ENCODE measurements at regions of chr6 and their contacts with region 1.

Region 1: GRCh38 chr6:11575408-11576033 is 38.0 kb downstream of the TMEM170B start:
- DNase-seq: peak; percentile 71 to 86 (median 83)
- H3K4me3 ChIP-seq: peak overlapping the region; percentile 36 to 71 (median 61)
- H3K4me3 Mint-ChIP-seq: peak overlapping the region; percentile 75 to 88
- H3K27ac ChIP-seq: peak overlapping the region; percentile 42 to 71
- H3K27ac Mint-ChIP-seq: peak overlapping the region; percentile 79 to 93 (median 89)
- H3K4me1 ChIP-seq: peaks cover 19 to 28% of the 10 kb centered on the region in 2 donors
- H3K4me1 Mint-ChIP-seq: peaks cover 42% of the 10 kb centered on the region
- H3K27me3 ChIP-seq: no peaks in the 10 kb centered on the region
- H3K27me3 Mint-ChIP-seq: no peaks in the 10 kb centered on the region
- CTCF ChIP-seq: peak; percentile 98

Region 2: GRCh38 chr6:10719296-10719963 is 856.1 kb before region 1 on chr6:
- intact Hi-C with region 1: no loop called
- DNase-seq: peak in 2 of 3 donors; percentile 12 to 14
- H3K4me3 ChIP-seq: peak overlapping the region in 2 of 3 experiments; percentile 56 to 76
- H3K4me3 Mint-ChIP-seq: peak overlapping the region; percentile 78 to 81
- H3K27ac ChIP-seq: peak overlapping the region in 1 of 2 donors; percentile 68
- H3K27ac Mint-ChIP-seq: peak overlapping the region in 3 of 7 donors; percentile 49 to 70 (median 68)
- H3K4me1 ChIP-seq: peaks cover 20 to 31% of the 10 kb centered on the region in 2 donors
- H3K4me1 Mint-ChIP-seq: peaks cover 37% of the 10 kb centered on the region
- H3K27me3 ChIP-seq: no peaks in the 10 kb centered on the region
- H3K27me3 Mint-ChIP-seq: no peaks in the 10 kb centered on the region
- CTCF ChIP-seq: no peak

Region 3: DNA sequence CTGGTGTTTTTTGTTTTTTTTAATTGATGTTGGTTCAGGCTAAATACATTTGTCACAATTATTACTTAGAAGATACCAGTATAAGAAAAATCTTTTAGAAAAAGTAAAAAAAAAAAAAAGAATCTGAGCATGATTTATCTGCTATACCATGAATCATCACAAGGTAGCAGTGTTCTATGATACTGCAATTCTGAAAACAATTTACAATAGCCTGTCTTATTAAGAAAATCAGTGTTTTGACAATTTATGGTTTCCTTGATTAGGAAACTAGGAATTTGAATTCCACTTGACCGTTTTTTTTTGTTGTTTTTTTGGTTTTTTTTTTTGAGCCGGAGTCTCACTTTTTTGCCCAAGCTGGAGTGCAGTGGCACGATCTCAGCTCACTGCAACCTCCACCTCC is 727.8 kb before region 1 on chr6:
- intact Hi-C with region 1: loop called in 1 of 2 experiments (anchors 10 kb)
- DNase-seq: no peak
- H3K4me3 ChIP-seq: no peak overlapping the region
- H3K4me3 Mint-ChIP-seq: no peak overlapping the region
- H3K27ac ChIP-seq: no peak overlapping the region
- H3K27ac Mint-ChIP-seq: no peak overlapping the region
- H3K4me1 ChIP-seq: no peaks in the 10 kb centered on the region
- H3K4me1 Mint-ChIP-seq: no peaks in the 10 kb centered on the region
- H3K27me3 ChIP-seq: peaks cover 0 to 3% of the 10 kb centered on the region in 2 donors
- H3K27me3 Mint-ChIP-seq: peaks cover 9 to 25% (median 14%) of the 10 kb centered on the region in 3 donors
- CTCF ChIP-seq: peak; percentile 58

Region 4: GRCh38 chr6:11144393-11144851 is 431.1 kb before region 1 on chr6:
- intact Hi-C with region 1: loop called (anchors 5 to 10 kb)
- DNase-seq: peak; percentile 69 to 82 (median 76)
- H3K4me3 ChIP-seq: no peak overlapping the region
- H3K4me3 Mint-ChIP-seq: peak overlapping the region in 1 of 2 donors; percentile 33
- H3K27ac ChIP-seq: peak overlapping the region in 1 of 2 donors; percentile 81
- H3K27ac Mint-ChIP-seq: peak overlapping the region; percentile 69 to 98 (median 95)
- H3K4me1 ChIP-seq: peaks cover 30 to 33% of the 10 kb centered on the region in 2 donors
- H3K4me1 Mint-ChIP-seq: peaks cover 35% of the 10 kb centered on the region
- H3K27me3 ChIP-seq: no peaks in the 10 kb centered on the region
- H3K27me3 Mint-ChIP-seq: peaks cover 0 to 2% (median 0%) of the 10 kb centered on the region in 3 donors
- CTCF ChIP-seq: peak; percentile 96

Region 5: GRCh38 chr6:11317885-11318771 is 257.4 kb before region 1 on chr6:
- intact Hi-C with region 1: loop called in 1 of 2 experiments (anchors 10 kb)
- DNase-seq: peak; percentile 97 to 100 (median 99)
- H3K4me3 ChIP-seq: no peak overlapping the region
- H3K4me3 Mint-ChIP-seq: peak overlapping the region in 1 of 2 donors; percentile 1
- H3K27ac ChIP-seq: peak overlapping the region; percentile 70 to 88
- H3K27ac Mint-ChIP-seq: peak overlapping the region; percentile 91 to 99 (median 98)
- H3K4me1 ChIP-seq: peaks cover 28 to 31% of the 10 kb centered on the region in 2 donors
- H3K4me1 Mint-ChIP-seq: peaks cover 53% of the 10 kb centered on the region
- H3K27me3 ChIP-seq: no peaks in the 10 kb centered on the region
- H3K27me3 Mint-ChIP-seq: peaks cover 0 to 3% (median 2%) of the 10 kb centered on the region in 3 donors
- CTCF ChIP-seq: no peak

Region 6: DNA sequence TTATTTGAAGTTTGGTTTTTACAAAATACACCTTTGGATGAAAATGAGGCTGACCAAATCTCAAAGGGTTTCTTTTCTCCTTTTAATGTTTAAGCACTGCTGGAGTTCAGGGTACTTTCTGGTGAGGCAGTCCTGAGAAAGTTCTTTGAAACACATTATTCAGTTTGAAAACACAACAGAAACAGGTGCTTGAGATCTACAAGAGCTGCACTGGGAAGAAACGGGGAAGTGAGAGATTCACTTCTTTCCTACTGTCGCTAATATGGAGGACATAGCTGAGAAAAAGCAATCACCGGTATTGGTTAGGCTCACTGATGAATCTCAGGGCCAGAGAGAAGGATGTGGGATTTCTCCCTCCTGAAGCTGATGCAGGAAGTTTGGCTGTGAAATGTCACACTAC is 60.8 kb before region 1 on chr6:
- intact Hi-C with region 1: loop called in 1 of 2 experiments (anchors 10 kb)
- DNase-seq: peak in 1 of 3 donors; percentile 23
- H3K4me3 ChIP-seq: peak overlapping the region in 1 of 3 experiments; percentile 28
- H3K4me3 Mint-ChIP-seq: peak overlapping the region; percentile 11 to 62
- H3K27ac ChIP-seq: peak overlapping the region in 1 of 2 donors; percentile 56
- H3K27ac Mint-ChIP-seq: peak overlapping the region in 6 of 7 donors; percentile 44 to 82 (median 78)
- H3K4me1 ChIP-seq: peaks cover 19 to 36% of the 10 kb centered on the region in 2 donors
- H3K4me1 Mint-ChIP-seq: peaks cover 39% of the 10 kb centered on the region
- H3K27me3 ChIP-seq: no peaks in the 10 kb centered on the region
- H3K27me3 Mint-ChIP-seq: peaks cover 0 to 2% (median 0%) of the 10 kb centered on the region in 3 donors
- CTCF ChIP-seq: no peak